Activated naive CD4-positive, alpha-beta T cell treated with anti-CD3 and anti-CD28 coated beads for 36 hours (primary cell): ENCODE measurements at regions of chr14 and their contacts with region 1.

Region 1: GRCh38 chr14:103920981-103921854 is 7.0 kb upstream of the TDRD9 start:
- DNase-seq: peak; percentile 94
- H3K4me3 Mint-ChIP-seq: peak overlapping the region; percentile 89
- H3K27ac Mint-ChIP-seq: peak overlapping the region; percentile 22
- H3K4me1 Mint-ChIP-seq: peaks cover 21% of the 10 kb centered on the region
- H3K27me3 Mint-ChIP-seq: no peaks in the 10 kb centered on the region

Region 2: DNA sequence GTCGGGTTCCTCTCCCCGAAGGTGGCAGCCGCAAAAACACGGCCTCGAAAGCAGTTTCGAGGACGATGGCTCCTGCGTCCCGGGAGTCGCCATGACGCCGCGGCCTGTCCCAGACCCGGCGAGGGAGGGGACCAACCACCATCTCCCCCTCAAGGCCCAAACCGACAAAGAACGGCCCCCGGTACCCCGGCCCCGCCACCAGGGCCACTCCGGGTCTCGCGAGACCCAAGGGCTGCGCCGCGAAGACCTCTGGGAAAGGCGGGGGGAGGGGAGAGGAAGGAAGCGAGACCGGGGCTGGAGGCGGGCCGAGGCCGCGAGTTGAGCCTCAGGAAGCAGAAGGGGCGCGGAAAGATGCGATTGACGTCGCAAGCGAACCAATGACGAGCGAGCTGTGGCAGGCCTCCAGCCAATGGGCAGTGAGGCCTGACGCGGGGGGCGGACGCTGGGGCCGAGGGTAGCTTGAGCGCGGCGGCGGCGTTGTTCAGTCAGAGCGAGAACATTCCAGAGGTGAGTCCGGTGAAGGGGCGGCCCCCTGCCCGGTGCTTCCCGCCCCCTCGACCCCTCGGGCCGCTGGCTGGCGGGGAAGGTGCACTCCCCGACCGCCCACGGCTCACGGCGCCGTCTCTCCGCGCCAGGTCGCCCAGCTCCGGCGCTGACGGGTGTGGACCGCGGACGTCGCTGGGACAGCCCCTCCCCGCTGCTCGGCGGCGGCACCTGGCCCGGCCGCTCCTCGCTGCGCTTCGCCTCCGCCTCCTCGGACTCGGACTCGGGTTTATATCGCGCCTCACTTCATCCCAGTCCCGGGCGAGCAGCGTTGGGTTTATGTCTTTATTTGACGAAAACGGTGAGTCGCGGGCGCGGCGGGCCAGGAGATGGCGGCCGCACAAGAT is 587.2 kb before region 1 on chr14 and contains the start of gene EIF5:
- CTCF ChIA-PET with region 1: no interaction called
- intact Hi-C with region 1: loop called (anchors 5 kb)
- DNase-seq: peak; percentile 99
- H3K4me3 Mint-ChIP-seq: peak within 1 kb of the TSS; percentile 85
- H3K27ac Mint-ChIP-seq: peak within 1 kb of the TSS; percentile 95
- H3K4me1 Mint-ChIP-seq: peaks cover 51% of the 10 kb centered on the region
- H3K27me3 Mint-ChIP-seq: no peaks in the 10 kb centered on the region
- total RNA-seq, gene EIF5: 117 to 121 TPM

Region 3: DNA sequence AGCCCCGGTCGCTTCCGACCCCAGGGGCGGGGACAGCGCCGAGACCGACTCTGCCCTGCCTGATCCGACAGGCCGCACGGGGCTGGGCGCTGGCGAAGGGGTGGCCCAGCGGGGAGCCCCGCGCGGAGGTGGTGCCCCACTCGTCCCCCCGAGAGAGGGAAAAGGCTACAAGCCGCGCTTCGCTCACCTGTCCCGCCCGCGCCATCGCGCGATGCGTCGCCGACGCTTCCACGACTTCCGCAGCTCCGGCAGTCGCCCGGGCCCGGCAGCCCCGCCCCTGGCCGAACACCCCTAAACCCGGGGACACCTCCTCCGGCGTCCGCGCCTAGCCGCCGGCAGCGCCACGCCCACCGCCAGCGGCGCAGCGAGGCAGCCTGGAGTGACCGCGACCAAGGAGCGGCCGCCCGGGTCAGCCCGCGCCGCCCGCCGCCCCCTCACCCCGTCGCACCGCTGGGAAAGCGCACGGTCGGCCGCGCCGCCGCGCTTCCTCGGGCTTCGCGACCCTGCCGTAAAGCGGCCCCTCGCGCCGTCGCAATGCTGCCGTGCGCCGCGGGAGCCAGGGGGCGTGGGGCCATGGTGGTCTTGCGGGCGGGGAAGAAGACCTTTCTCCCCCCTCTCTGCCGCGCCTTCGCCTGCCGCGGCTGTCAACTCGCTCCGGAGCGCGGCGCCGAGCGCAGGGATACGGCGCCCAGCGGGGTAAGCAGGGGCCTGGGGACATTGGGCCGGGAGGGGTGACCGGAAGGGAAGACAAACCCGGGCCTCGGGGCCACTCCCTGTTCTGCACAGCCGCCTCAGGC is 358.6 kb before region 1 on chr14 and contains the starts of genes BAG5 and COA8:
- CTCF ChIA-PET with region 1: no interaction called
- intact Hi-C with region 1: loop called (anchors 5 kb)
- DNase-seq: peak; percentile 90
- H3K4me3 Mint-ChIP-seq: peak within 1 kb of the TSS; percentile 89
- H3K27ac Mint-ChIP-seq: peak within 1 kb of the TSS; percentile 91
- H3K4me1 Mint-ChIP-seq: peaks cover 65% of the 10 kb centered on the region
- H3K27me3 Mint-ChIP-seq: no peaks in the 10 kb centered on the region
- total RNA-seq, gene BAG5: 15.5 to 16.6 TPM
- total RNA-seq, gene COA8: 36.8 to 48.4 TPM

Region 4: DNA sequence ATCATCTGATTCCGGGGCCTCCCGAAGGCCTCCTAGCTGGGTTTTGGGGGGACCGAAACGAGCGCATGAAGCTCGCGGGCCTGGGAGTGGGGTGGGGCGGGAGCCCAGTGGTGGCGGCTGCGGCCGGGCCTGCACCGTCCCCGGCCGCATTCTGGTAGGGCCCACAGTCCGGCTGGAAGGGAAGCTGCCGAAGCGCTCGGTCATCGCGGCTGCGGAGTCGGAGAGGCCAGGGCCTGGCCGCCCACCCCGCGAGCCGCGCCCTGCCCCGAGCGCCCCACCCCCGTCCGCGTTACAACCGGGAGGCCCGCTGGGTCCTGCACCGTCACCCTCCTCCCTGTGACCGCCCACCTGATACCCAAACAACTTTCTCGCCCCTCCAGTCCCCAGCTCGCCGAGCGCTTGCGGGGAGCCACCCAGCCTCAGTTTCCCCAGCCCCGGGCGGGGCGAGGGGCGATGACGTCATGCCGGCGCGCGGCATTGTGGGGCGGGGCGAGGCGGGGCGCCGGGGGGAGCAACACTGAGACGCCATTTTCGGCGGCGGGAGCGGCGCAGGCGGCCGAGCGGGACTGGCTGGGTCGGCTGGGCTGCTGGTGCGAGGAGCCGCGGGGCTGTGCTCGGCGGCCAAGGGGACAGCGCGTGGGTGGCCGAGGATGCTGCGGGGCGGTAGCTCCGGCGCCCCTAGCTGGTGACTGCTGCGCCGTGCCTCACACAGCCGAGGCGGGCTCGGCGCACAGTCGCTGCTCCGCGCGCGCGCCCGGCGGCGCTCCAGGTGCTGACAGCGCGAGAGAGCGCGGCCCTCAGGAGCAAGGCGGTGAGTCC is 292.3 kb before region 1 on chr14 and contains the start of gene KLC1:
- CTCF ChIA-PET with region 1: no interaction called
- intact Hi-C with region 1: loop called (anchors 10 kb)
- DNase-seq: peak; percentile 85
- H3K4me3 Mint-ChIP-seq: peak within 1 kb of the TSS; percentile 86
- H3K27ac Mint-ChIP-seq: peak within 1 kb of the TSS; percentile 80
- H3K4me1 Mint-ChIP-seq: peaks cover 40% of the 10 kb centered on the region
- H3K27me3 Mint-ChIP-seq: no peaks in the 10 kb centered on the region
- total RNA-seq, gene KLC1: 94.8 to 101 TPM

Region 5: DNA sequence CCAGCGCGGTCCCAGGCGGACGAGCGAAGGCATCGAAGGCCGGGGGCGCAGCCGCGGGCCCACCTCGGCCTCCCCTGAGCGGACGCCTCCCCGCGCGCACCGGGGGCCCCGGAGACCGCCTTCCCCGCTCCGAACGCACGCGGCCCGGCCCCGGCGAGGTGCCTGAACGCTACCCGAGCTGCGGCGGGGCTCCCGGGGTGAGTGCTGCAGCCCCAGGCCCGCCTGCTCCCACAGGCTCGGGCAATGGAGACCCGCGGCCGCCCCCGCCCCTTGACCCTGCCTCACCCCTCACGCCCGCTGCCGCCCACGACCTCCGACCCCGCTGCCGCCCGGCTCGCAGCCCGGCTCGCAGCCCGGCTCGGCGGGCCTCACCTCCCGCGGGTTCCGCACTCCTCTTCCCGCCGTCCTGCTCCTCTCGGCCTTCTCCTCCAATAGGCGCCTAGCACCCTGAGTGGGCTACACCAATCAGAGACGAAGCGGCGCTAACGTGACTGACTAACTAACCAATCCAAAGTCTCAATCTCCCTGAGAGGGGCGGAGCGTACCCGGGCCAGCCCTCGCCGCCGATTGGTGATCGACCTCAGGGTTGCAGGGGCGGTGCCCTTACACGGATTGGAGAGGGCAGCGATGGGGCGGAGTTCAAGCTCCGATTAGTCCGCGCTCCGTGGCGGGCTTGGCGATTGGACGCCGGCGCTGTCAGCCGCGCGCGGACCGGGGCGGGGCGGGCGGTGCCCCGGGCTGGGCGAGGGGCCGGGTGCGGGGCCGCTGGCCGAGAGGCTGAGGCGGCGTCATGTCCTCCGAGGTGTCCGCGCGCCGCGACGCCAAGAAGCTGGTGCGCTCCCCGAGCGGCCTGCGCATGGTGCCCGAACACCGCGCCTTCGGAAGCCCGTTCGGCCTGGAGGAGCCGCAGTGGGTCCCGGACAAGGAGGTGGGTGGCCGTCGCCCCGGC is 205.9 kb before region 1 on chr14 and contains the starts of genes XRCC3 and ZFYVE21:
- CTCF ChIA-PET with region 1: interaction called, 3 read pairs
- intact Hi-C with region 1: loop called (anchors 1 kb)
- DNase-seq: peak; percentile 100
- H3K4me3 Mint-ChIP-seq: peak within 1 kb of the TSS; percentile 93
- H3K27ac Mint-ChIP-seq: peak within 1 kb of the TSS; percentile 86
- H3K4me1 Mint-ChIP-seq: peaks cover 45% of the 10 kb centered on the region
- H3K27me3 Mint-ChIP-seq: no peaks in the 10 kb centered on the region
- total RNA-seq, gene XRCC3: 49.0 to 50.4 TPM
- total RNA-seq, gene ZFYVE21: 9.1 to 10.4 TPM

Region 6: DNA sequence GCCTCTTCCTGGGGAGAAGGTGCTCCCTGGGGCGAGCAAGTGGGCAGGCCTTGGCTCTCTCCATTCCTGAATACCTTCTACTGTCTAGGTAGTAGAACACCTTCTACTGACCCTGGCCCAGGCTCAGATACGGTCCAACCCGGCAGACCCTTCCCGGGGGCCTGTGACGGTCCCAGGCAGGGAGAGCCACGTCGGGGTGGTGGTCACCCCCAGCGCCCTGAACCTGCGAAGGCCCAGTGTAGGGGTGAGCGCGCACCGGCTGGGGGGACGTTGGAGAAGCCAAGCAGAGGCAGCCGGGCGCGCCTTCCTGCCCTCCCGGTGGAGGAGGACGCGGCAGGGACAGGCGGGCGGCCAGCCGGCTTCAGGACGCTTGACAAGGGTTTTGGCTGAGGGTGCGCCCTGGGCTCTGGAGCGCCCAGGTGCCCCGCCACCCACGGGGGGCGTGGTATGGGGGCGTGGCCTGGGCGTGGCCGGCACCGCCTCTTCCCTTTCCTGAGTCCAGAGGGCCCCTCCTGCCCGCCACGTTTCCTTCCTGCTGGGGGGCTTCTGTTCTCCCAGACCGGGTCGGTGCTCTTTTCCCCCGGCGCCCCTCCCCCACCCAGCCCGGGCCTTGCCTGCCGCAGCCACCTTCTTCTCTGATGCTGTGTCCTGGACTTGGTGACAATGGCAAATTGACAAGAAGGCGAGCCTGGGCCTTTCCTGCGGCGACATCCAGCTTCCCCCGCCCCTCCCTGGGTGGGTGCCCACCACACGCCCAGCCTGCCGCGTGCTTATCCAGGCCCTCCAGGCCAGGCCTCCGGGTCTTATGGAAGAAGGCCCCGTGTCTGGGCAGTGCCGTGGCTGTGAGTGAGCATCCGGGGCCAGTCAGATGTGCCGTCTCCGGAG is 49.4 kb before region 1 on chr14:
- CTCF ChIA-PET with region 1: no interaction called
- intact Hi-C with region 1: loop called (anchors 1 kb)
- DNase-seq: peak; percentile 77
- H3K4me3 Mint-ChIP-seq: peak overlapping the region; percentile 77
- H3K27ac Mint-ChIP-seq: peak overlapping the region; percentile 54
- H3K4me1 Mint-ChIP-seq: peaks cover 8% of the 10 kb centered on the region
- H3K27me3 Mint-ChIP-seq: no peaks in the 10 kb centered on the region

Region 7: DNA sequence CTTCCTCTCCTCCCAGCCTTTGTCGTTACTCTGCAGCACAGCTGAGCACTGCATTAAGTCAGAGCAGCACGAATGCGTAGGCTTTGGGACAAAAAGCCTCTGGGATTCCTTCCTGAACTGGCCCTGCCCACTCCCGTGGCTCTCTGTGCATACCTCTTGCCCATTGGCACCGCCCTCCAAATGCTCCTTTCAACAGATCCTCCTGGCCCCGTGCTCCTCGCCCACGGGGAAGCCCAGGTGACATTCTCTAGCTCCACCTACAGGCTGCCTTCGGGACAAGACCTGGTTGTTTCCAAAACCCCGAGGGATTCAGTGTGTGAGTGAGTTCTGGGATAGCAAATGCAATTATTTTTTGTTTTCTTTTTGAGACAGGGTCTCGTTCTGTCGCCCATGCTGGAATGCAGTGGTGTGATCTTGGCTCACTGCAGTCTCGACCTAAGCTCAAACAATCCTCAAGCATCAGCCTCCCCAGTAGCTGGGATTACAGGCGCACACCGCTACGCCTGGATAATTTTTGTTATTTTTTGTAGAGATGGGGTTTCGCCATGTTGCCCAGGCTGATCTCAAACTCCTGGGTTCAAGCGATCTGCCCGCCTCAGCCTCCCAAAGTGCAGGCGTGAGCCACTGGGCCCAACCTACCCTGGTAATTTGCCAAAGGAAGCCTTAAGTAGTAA is 10.8 kb before region 1 on chr14:
- CTCF ChIA-PET with region 1: interaction called, 11 read pairs
- intact Hi-C with region 1: no loop called
- DNase-seq: peak; percentile 87
- H3K4me3 Mint-ChIP-seq: peak overlapping the region; percentile 25
- H3K27ac Mint-ChIP-seq: peak overlapping the region; percentile 84
- H3K4me1 Mint-ChIP-seq: peaks cover 24% of the 10 kb centered on the region
- H3K27me3 Mint-ChIP-seq: no peaks in the 10 kb centered on the region